ENCODE measurements at regions of chr6 and their contacts with region 1.

Region 1: GRCh38 chr6:11232193-11232769 is at the start of gene NEDD9:
- DNase-seq: peak; percentile 98
- H3K4me3 Mint-ChIP-seq: peak within 1 kb of the TSS; percentile 81
- H3K27ac Mint-ChIP-seq: peak within 1 kb of the TSS; percentile 96
- H3K4me1 Mint-ChIP-seq: peaks cover 65% of the 10 kb centered on the region
- H3K27me3 Mint-ChIP-seq: no peaks in the 10 kb centered on the region
- total RNA-seq, gene NEDD9: 26.6 to 31.5 TPM

Region 2: GRCh38 chr6:10595731-10596664 is 636.3 kb before region 1 on chr6:
- CTCF ChIA-PET with region 1: no interaction called
- POLR2A ChIA-PET with region 1: no interaction called
- intact Hi-C with region 1: no loop called
- DNase-seq: peak; percentile 9
- H3K4me3 Mint-ChIP-seq: no peak overlapping the region
- H3K27ac Mint-ChIP-seq: no peak overlapping the region
- H3K4me1 Mint-ChIP-seq: peaks cover 3% of the 10 kb centered on the region
- H3K27me3 Mint-ChIP-seq: no peaks in the 10 kb centered on the region

Region 3: GRCh38 chr6:11172501-11173332 is 59.6 kb before region 1 on chr6:
- CTCF ChIA-PET with region 1: interaction called, 5 read pairs
- POLR2A ChIA-PET with region 1: no interaction called
- intact Hi-C with region 1: loop called (anchors 1 kb)
- DNase-seq: peak; percentile 81
- H3K4me3 Mint-ChIP-seq: peak overlapping the region; percentile 16
- H3K27ac Mint-ChIP-seq: no peak overlapping the region
- H3K4me1 Mint-ChIP-seq: peaks cover 16% of the 10 kb centered on the region
- H3K27me3 Mint-ChIP-seq: no peaks in the 10 kb centered on the region

Region 4: GRCh38 chr6:11244387-11245126 is 12.3 kb after region 1 on chr6:
- CTCF ChIA-PET with region 1: interaction called, 4 read pairs
- POLR2A ChIA-PET with region 1: interaction called, 3 read pairs
- intact Hi-C with region 1: loop called (anchors 1 kb)
- DNase-seq: no peak
- H3K4me3 Mint-ChIP-seq: no peak overlapping the region
- H3K27ac Mint-ChIP-seq: no peak overlapping the region
- H3K4me1 Mint-ChIP-seq: peaks cover 15% of the 10 kb centered on the region
- H3K27me3 Mint-ChIP-seq: no peaks in the 10 kb centered on the region

Region 5: GRCh38 chr6:11317885-11318771 is 85.8 kb after region 1 on chr6:
- CTCF ChIA-PET with region 1: interaction called, 3 read pairs
- POLR2A ChIA-PET with region 1: interaction called, 14 read pairs
- intact Hi-C with region 1: loop called (anchors 1 kb)
- DNase-seq: peak; percentile 88
- H3K4me3 Mint-ChIP-seq: peak overlapping the region; percentile 14
- H3K27ac Mint-ChIP-seq: peak overlapping the region; percentile 92
- H3K4me1 Mint-ChIP-seq: peaks cover 63% of the 10 kb centered on the region
- H3K27me3 Mint-ChIP-seq: no peaks in the 10 kb centered on the region

Region 6: DNA sequence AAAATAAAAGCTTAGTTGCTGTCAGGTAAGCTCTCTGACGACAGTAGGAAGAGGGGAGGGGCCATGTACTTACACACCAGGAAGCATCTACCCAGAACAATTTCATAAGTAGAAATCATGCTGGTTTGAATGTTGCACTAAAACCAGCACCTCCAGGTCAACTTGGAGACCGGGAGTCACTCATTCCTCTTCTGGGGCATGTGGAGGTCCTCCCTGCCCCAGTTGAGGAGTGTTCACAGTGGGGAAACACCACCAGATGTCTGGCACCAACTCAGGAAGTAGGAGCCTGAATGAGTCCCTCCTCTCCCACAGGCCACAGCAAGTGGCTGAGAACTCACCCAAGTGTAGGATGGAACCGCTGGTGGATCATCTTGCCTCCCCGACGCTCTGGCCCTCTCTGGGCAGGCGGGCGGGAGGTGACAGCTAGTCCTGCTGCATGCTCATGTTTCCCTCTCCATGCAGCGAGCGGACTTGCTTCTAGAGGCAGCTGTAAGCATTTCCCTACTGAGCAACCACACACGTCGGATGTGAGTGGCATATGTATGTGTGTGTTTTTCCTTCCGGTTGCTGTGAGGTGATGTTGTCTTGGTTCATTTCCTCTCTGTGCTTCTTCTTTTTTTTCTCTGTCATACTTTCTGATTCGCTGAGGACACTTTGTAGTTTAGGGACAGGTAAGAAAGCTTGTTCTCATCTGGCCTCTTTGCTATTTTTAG is 149.7 kb after region 1 on chr6:
- CTCF ChIA-PET with region 1: no interaction called
- POLR2A ChIA-PET with region 1: interaction called, 8 read pairs
- intact Hi-C with region 1: loop called (anchors 1 kb)
- DNase-seq: peak; percentile 82
- H3K4me3 Mint-ChIP-seq: peak overlapping the region; percentile 85
- H3K27ac Mint-ChIP-seq: peak overlapping the region; percentile 95
- H3K4me1 Mint-ChIP-seq: peaks cover 58% of the 10 kb centered on the region
- H3K27me3 Mint-ChIP-seq: no peaks in the 10 kb centered on the region

Measured in activated CD4-positive, alpha-beta memory T cell treated with anti-CD3 and anti-CD28 coated beads for 36 hours (primary cell).